AG04450 (cell line): ENCODE measurements at regions of chr1 and their contacts with region 1.

Region 1: DNA sequence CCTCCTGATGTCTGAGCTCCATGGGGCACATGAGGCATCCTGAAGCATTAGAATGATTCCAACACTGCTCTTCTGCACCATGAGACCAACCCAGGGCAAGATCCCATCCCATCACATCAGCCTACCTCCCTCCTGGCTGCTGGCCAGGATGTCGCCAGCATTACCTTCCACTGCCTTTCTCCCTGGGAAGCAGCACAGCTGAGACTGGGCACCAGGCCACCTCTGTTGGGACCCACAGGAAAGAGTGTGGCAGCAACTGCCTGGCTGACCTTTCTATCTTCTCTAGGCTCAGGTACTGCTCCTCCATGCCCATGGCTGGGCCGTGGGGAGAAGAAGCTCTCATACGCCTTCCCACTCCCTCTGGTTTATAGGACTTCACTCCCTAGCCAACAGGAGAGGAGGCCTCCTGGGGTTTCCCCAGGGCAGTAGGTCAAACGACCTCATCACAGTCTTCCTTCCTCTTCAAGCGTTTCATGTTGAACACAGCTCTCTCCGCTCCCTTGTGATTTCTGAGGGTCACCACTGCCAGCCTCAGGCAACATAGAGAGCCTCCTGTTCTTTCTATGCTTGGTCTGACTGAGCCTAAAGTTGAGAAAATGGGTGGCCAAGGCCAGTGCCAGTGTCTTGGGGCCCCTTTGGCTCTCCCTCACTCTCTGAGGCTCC is 11.1 kb upstream of the RASSF5 start:
- DNase-seq: no peak
- H3K4me3 ChIP-seq: no peak overlapping the region
- H3K27ac ChIP-seq: peak overlapping the region; percentile 21
- H3K27me3 ChIP-seq: no peaks in the 10 kb centered on the region
- CTCF ChIP-seq: no peak

Region 2: GRCh38 chr1:206507284-206508129 is 11.2 kb after region 1 on chr1 and contains the start of gene RASSF5:
- CTCF ChIA-PET with region 1: interaction called, 11 read pairs
- POLR2A ChIA-PET with region 1: interaction called, 3 read pairs
- DNase-seq: no peak
- H3K4me3 ChIP-seq: peak within 1 kb of the TSS; percentile 60
- H3K27ac ChIP-seq: no peak within 1 kb of the TSS
- H3K27me3 ChIP-seq: peaks cover 8% of the 10 kb centered on the region
- CTCF ChIP-seq: no peak
- polyA plus RNA-seq, gene RASSF5: 2.3 and 2.4 TPM in 2 replicates

Region 3: GRCh38 chr1:206537141-206537540 is 40.9 kb after region 1 on chr1:
- CTCF ChIA-PET with region 1: no interaction called
- POLR2A ChIA-PET with region 1: no interaction called
- DNase-seq: no peak
- H3K4me3 ChIP-seq: no peak overlapping the region
- H3K27ac ChIP-seq: no peak overlapping the region
- H3K27me3 ChIP-seq: no peaks in the 10 kb centered on the region
- CTCF ChIP-seq: no peak